CD14-positive monocyte (primary cell): ENCODE measurements at regions of chr14 and their contacts with region 1.

Region 1: GRCh38 chr14:69611201-69612011 is at the start of gene SUSD6:
- DNase-seq: peak; percentile 87 to 92 (median 91)
- H3K4me3 ChIP-seq: peak within 1 kb of the TSS; percentile 79 to 98 (median 91)
- H3K4me3 Mint-ChIP-seq: peak within 1 kb of the TSS; percentile 98 to 99
- H3K27ac ChIP-seq: peak within 1 kb of the TSS; percentile 91 to 96
- H3K27ac Mint-ChIP-seq: peak within 1 kb of the TSS; percentile 97 to 100 (median 99)
- H3K4me1 ChIP-seq: peaks cover 50 to 54% of the 10 kb centered on the region in 2 donors
- H3K4me1 Mint-ChIP-seq: peaks cover 59% of the 10 kb centered on the region
- H3K27me3 ChIP-seq: no peaks in the 10 kb centered on the region
- H3K27me3 Mint-ChIP-seq: peaks cover 0 to 2% (median 1%) of the 10 kb centered on the region in 3 donors
- CTCF ChIP-seq: no peak
- polyA plus RNA-seq, gene SUSD6: 17.3 to 81.8 (median 30.1) TPM

Region 2: DNA sequence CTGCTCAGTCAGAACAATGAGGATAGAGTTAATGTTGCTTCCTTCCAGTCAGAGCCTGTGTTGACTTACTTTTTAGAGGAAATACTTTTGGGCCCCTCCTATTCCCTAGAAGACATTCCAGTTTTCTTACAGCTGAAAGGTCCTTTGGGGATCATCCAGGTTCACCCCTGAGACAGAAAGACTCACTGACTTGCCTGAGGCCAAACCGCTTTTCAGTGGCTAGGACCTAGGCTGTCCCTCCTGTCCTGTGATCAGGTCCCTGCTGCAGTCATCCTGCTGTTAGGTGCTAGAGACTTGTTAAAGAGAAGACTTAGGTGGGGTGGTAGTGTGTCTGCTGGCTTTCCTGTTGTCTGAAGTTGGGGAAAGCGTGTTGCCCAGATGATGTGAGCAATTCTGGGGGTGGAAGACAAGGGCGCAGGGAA is 39.6 kb after region 1 on chr14:
- intact Hi-C with region 1: loop called (anchors 2 kb)
- DNase-seq: no peak
- H3K4me3 ChIP-seq: peak overlapping the region in 1 of 3 experiments; percentile 16
- H3K4me3 Mint-ChIP-seq: peak overlapping the region in 1 of 2 donors; percentile 54
- H3K27ac ChIP-seq: peak overlapping the region; percentile 22 to 98
- H3K27ac Mint-ChIP-seq: peak overlapping the region; percentile 88 to 100 (median 100)
- H3K4me1 ChIP-seq: peaks cover 87 to 96% of the 10 kb centered on the region in 2 donors
- H3K4me1 Mint-ChIP-seq: peaks cover 91% of the 10 kb centered on the region
- H3K27me3 ChIP-seq: no peaks in the 10 kb centered on the region
- H3K27me3 Mint-ChIP-seq: peaks cover 0 to 3% (median 2%) of the 10 kb centered on the region in 3 donors
- CTCF ChIP-seq: no peak

Region 3: GRCh38 chr14:69701857-69702256 is 90.5 kb after region 1 on chr14:
- intact Hi-C with region 1: loop called in 1 of 2 experiments (anchors 5 kb)
- DNase-seq: no peak
- H3K4me3 ChIP-seq: peak overlapping the region in 1 of 3 experiments; percentile 65
- H3K4me3 Mint-ChIP-seq: no peak overlapping the region
- H3K27ac ChIP-seq: peak overlapping the region in 1 of 2 donors; percentile 93
- H3K27ac Mint-ChIP-seq: peak overlapping the region; percentile 11 to 99 (median 99)
- H3K4me1 ChIP-seq: peaks cover 78 to 89% of the 10 kb centered on the region in 2 donors
- H3K4me1 Mint-ChIP-seq: peaks cover 88% of the 10 kb centered on the region
- H3K27me3 ChIP-seq: no peaks in the 10 kb centered on the region
- H3K27me3 Mint-ChIP-seq: peaks cover 0 to 1% (median 0%) of the 10 kb centered on the region in 3 donors
- CTCF ChIP-seq: no peak